ENCODE measurements at regions of chr22 and their contacts with region 1.

Region 1: DNA sequence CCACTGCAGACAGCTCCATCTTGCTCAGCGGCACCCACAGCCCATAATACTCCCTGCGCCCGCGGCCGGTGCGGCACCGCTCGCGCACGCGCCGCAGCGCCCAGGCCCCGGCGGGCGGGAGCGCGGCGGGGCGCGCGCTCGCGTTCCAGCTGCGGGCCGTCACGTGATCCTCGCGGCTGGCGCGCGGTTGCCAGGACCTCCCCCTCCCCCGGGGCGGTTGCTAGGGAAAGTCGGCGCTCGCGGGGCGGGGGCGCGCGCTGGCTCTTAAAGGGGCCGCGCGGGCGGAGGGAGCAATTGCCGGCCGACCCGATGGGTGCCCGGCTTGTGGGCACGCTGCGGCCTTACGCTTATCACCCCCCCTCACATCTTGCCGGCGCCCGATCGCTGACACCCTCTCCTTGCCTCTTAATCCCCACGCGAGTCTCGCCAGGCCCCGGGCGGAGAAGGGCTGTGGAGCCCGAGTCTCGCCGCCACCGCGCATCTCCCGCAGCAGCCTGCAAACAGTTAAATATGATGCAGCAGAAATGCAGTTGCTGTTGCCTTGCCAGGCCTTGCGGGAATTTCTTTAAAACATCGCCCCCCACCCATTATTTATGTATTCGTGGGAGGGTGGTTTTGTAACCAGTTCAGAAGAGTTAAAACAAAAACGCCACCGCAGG is at the start of gene CBX6:
- DNase-seq: peak; percentile 91 to 93
- ATAC-seq: peak; percentile 83 to 87
- H3K4me3 ChIP-seq: peak within 1 kb of the TSS; percentile 77 to 98 (median 90)
- H3K27ac ChIP-seq: peak within 1 kb of the TSS; percentile 86 to 99 (median 97)
- H3K4me1 ChIP-seq: peaks cover 12 to 32% of the 10 kb centered on the region in 2 donors
- H3K27me3 ChIP-seq: no peaks in the 10 kb centered on the region
- CTCF ChIP-seq: peak in 2 of 5 experiments; percentile 25 to 41
- POLR2A ChIP-seq: peak; percentile 74 to 79
- total RNA-seq, gene CBX6: 8.4 to 21.5 (median 17.7) TPM

Region 2: GRCh38 chr22:38705235-38706100 is 166.8 kb before region 1 on chr22 and contains the start of gene GTPBP1:
- in situ Hi-C with region 1: no loop called
- intact Hi-C with region 1: loop called (anchors 5 kb)
- DNase-seq: peak; percentile 100
- ATAC-seq: peak; percentile 85 to 88
- H3K4me3 ChIP-seq: peak within 1 kb of the TSS; percentile 75 to 100 (median 90)
- H3K27ac ChIP-seq: peak within 1 kb of the TSS; percentile 92 to 100 (median 97)
- H3K4me1 ChIP-seq: peaks cover 34% of the 10 kb centered on the region in 2 donors
- H3K27me3 ChIP-seq: no peaks in the 10 kb centered on the region
- CTCF ChIP-seq: peak in 2 of 5 experiments; percentile 11 to 28
- POLR2A ChIP-seq: peak; percentile 98 to 99
- total RNA-seq, gene GTPBP1: 27.7 to 124 (median 36.0) TPM

Region 3: DNA sequence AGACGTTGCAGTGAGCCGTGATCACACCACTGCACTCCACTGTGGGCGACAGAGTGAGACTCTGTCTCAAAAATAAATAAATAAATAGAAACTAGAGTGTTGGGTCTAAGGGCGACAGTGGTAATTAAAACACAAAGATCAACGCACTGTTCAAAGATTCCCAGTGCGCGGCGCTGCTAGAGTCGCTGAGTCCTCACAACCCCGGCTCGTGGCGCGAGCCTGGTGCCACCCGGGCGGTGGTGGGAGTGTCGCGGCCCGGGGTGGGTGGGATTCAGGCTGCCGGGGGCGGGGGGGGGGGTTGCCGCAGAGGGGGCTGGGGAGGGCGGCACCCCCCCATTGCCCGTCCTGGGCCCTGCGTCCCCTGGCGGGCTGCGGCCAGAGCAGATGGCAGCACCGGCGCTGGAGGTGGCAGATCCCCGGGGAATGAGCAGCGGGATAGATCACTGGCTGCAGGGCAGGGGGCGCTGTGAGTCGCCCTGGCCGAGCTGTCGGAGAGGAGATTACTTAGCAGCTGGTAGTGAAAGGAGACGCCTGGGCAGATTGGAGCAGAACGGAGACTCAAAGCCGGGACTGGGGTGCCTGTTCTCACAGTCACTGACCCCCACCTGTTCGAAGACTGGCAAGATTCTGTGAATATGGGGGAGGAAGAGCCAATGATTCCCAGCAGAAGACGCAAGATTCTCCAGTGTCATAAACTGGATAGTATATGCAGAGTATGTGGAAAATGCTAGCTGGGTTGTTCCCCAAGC is 54.9 kb after region 1 on chr22:
- in situ Hi-C with region 1: no loop called
- intact Hi-C with region 1: loop called (anchors 1 kb)
- DNase-seq: peak; percentile 40 to 68
- ATAC-seq: peak; percentile 70 to 73
- H3K4me3 ChIP-seq: peak overlapping the region; percentile 19 to 40 (median 33)
- H3K27ac ChIP-seq: peak overlapping the region in 2 of 4 donors; percentile 24 to 31
- H3K4me1 ChIP-seq: peaks cover 18 to 19% of the 10 kb centered on the region in 2 donors
- H3K27me3 ChIP-seq: no peaks in the 10 kb centered on the region
- CTCF ChIP-seq: peak in 4 of 5 experiments; percentile 49 to 67 (median 52)
- POLR2A ChIP-seq: no peak

Region 4: DNA sequence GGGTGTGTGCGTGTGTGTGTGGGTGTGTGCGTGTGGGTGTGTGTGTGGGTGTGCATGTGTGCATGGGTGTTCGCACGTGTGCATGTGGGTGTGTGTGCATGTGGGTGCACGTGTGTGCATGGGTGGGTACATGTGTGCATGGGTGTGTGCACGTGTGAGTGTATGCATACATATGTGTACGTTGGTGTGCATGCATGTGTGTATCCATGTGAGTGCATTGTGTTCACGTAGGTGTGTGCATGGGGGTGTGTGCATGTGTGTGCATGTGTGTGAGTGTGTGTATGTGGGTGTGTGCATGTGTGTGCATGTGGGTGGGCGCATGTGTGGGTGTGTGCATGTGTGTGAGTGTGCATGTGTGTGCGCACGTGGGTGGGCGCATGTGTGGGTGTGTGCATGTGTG is 65.2 kb after region 1 on chr22:
- in situ Hi-C with region 1: no loop called
- intact Hi-C with region 1: no loop called
- DNase-seq: no peak
- ATAC-seq: no peak
- H3K4me3 ChIP-seq: no peak overlapping the region
- H3K27ac ChIP-seq: no peak overlapping the region
- H3K4me1 ChIP-seq: no peaks in the 10 kb centered on the region
- H3K27me3 ChIP-seq: peaks cover 2 to 18% (median 4%) of the 10 kb centered on the region in 3 donors
- CTCF ChIP-seq: no peak
- POLR2A ChIP-seq: no peak

Region 5: DNA sequence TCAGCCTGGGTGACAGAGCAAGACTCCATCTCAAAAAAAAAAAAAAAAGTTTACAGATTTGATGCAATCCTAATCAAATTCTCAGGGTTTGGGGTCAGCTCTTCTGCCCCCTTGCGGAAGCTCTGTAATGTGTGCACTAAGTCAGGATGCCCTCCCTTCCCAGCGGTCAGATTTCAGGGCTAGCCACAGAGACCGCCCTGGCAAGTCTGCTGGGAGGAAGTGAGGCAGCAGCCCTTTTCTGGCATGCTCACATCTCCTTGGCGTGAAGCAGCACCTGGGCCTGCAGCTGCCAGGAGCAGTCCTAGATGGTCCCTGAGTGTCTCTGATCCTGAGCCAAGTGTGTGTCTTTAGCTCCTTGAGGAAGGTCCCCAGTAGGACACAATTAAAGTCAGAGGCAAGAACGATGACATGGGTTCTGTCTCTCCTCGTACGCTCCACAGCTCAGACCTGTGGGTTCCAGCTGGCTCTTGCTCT is 130.9 kb after region 1 on chr22:
- in situ Hi-C with region 1: loop called in 3 of 4 experiments (anchors 5 to 10 kb)
- intact Hi-C with region 1: loop called (anchors 1 kb)
- DNase-seq: peak; percentile 27 to 43
- ATAC-seq: peak; percentile 68 to 77
- H3K4me3 ChIP-seq: no peak overlapping the region
- H3K27ac ChIP-seq: no peak overlapping the region
- H3K4me1 ChIP-seq: no peaks in the 10 kb centered on the region
- H3K27me3 ChIP-seq: peaks cover 0 to 5% (median 0%) of the 10 kb centered on the region in 3 donors
- CTCF ChIP-seq: peak; percentile 49 to 75 (median 65)
- POLR2A ChIP-seq: no peak

Region 6: DNA sequence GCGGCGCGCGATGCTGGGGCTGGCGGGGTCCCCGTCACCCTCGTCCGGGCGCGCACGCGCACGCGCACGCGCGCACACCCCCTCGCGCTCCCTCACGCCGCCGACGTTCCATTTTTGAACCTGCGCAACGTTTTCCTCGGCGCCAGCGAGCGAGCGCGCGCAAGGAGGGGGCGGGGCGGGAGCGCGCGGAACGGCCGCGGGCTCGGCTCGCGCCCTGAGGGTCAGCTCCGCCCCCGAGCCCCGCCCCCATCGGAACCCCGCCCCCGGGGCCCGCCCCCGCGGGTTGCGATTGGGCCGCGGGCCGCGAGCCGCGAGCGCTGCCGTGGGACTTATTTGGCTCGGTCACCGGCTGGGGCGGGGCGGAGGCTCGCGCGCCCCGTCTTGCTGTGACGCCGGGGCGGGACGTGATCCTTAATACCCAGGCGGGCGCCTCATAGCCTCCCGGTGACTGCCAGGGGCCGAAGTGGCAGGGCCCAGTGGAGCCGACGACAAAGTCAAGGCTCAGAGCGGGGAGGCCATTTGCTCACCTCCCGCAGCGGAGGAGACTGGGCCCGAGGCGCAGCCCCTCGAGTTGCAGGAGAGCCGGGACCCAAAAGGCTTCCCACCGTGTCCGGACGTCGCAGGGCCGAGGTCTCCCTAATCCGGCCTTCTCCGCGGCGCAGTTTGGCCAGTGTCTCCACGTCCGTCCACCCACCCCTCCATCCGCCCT is 280.4 kb after region 1 on chr22 and contains the start of gene CBX7:
- in situ Hi-C with region 1: no loop called
- intact Hi-C with region 1: loop called (anchors 1 kb)
- DNase-seq: peak; percentile 90 to 95
- ATAC-seq: peak; percentile 79 to 87
- H3K4me3 ChIP-seq: peak within 1 kb of the TSS; percentile 85 to 98 (median 97)
- H3K27ac ChIP-seq: peak within 1 kb of the TSS; percentile 94 to 99 (median 98)
- H3K4me1 ChIP-seq: peaks cover 29 to 31% of the 10 kb centered on the region in 2 donors
- H3K27me3 ChIP-seq: no peaks in the 10 kb centered on the region
- CTCF ChIP-seq: no peak
- POLR2A ChIP-seq: peak; percentile 87 to 96
- total RNA-seq, gene CBX7: 52.4 to 78.1 (median 62.3) TPM

Measured in gastrocnemius medialis (tissue), 4 donors.